ENCODE measurements at regions of chr4 and their contacts with region 1.

Region 1: GRCh38 chr4:26319467-26319948 is 1.3 kb upstream of the RBPJ start:
- DNase-seq: peak; percentile 99
- H3K4me3 Mint-ChIP-seq: peak overlapping the region; percentile 97
- H3K27ac Mint-ChIP-seq: peak overlapping the region; percentile 100
- H3K4me1 Mint-ChIP-seq: peaks cover 29% of the 10 kb centered on the region
- H3K27me3 Mint-ChIP-seq: no peaks in the 10 kb centered on the region

Region 2: DNA sequence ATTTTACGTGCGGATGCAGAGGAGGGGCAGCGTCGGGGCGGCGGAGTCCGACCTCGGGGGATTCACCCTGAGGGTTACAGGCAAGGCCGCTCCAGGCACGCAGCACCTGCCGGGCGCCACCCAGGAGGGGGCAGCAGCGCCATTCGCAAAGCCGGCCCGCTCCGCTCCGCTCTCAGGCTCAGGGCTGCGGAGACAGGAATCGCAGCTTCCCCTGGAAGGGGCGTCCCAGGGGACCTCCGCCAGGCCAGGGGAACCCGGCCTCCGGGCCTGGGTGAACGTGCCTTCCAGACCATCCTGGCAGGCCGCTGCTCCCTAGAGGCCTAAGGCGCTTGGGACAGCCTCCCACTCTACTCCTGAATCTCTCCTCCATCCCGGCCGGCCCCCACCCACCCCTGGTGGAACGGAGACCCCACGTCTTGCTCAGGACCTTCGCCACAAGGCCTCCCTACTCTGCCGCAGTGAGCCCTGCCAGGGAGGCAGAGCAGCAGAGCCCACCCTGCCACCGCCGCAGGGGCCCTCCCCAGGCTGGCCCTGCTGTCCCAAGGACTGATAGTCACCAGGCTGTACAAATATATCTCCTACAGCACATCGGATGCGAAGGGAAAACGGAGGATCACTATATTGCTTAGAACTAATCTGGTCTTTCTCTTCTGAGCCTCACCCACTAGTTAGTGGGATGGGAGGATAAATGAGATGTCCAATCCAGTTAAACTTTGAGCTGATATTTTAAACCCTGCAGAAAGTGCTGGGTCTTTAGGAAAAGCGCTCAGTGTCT is 290.5 kb before region 1 on chr4:
- intact Hi-C with region 1: loop called (anchors 2 kb)
- DNase-seq: peak; percentile 59
- H3K4me3 Mint-ChIP-seq: no peak overlapping the region
- H3K27ac Mint-ChIP-seq: peak overlapping the region; percentile 67
- H3K4me1 Mint-ChIP-seq: peaks cover 25% of the 10 kb centered on the region
- H3K27me3 Mint-ChIP-seq: peaks cover 2% of the 10 kb centered on the region

Region 3: GRCh38 chr4:26081795-26082498 is 237.6 kb before region 1 on chr4:
- intact Hi-C with region 1: loop called (anchors 1 kb)
- DNase-seq: no peak
- H3K4me3 Mint-ChIP-seq: no peak overlapping the region
- H3K27ac Mint-ChIP-seq: peak overlapping the region; percentile 93
- H3K4me1 Mint-ChIP-seq: peaks cover 79% of the 10 kb centered on the region
- H3K27me3 Mint-ChIP-seq: no peaks in the 10 kb centered on the region

Region 4: GRCh38 chr4:26088433-26088928 is 231.0 kb before region 1 on chr4:
- intact Hi-C with region 1: loop called (anchors 1 kb)
- DNase-seq: no peak
- H3K4me3 Mint-ChIP-seq: peak overlapping the region; percentile 55
- H3K27ac Mint-ChIP-seq: peak overlapping the region; percentile 94
- H3K4me1 Mint-ChIP-seq: peaks cover 70% of the 10 kb centered on the region
- H3K27me3 Mint-ChIP-seq: no peaks in the 10 kb centered on the region

Region 5: GRCh38 chr4:26130173-26130572 is 189.3 kb before region 1 on chr4:
- intact Hi-C with region 1: loop called (anchors 1 kb)
- DNase-seq: peak; percentile 28
- H3K4me3 Mint-ChIP-seq: peak overlapping the region; percentile 34
- H3K27ac Mint-ChIP-seq: peak overlapping the region; percentile 90
- H3K4me1 Mint-ChIP-seq: peaks cover 81% of the 10 kb centered on the region
- H3K27me3 Mint-ChIP-seq: no peaks in the 10 kb centered on the region

Region 6: GRCh38 chr4:26141911-26142638 is 177.4 kb before region 1 on chr4:
- intact Hi-C with region 1: loop called (anchors 1 kb)
- DNase-seq: no peak
- H3K4me3 Mint-ChIP-seq: peak overlapping the region; percentile 22
- H3K27ac Mint-ChIP-seq: peak overlapping the region; percentile 89
- H3K4me1 Mint-ChIP-seq: peaks cover 73% of the 10 kb centered on the region
- H3K27me3 Mint-ChIP-seq: no peaks in the 10 kb centered on the region

Region 7: DNA sequence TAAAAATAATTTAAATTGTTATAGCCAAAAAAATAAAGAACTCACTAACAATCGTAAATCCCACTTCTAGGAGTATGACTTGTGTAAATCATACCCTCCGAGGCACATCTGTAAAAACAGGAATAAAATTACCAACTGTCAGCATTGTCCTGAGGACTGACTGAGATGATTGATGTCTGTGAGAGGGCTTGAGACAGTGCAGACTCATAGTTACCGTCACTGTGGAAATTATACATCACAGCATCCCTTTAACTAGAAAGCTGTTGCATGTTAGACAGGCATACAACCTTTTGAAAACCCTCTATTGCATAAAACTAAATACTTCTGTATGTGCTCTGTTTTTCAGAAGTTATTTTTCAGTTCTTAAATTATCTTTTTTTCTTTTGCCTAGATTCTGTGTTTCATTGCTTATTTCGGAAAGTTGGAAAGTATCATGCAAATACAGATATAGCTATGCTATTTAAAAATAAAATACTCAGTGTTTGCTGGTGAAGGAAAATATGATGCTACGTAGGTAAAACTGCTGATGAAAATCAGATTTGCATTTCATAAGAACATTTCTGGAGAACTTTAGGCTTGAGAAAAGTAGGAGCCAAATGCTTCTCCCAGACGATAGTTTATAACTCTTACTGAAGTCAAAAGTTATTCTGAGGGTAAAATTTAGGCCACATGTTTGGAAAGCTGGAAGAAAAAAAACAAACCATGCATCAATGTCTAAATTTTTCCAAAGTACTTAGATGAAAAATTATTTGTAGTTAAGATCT is 12.3 kb before region 1 on chr4:
- intact Hi-C with region 1: loop called (anchors 1 kb)
- DNase-seq: no peak
- H3K4me3 Mint-ChIP-seq: peak overlapping the region; percentile 2
- H3K27ac Mint-ChIP-seq: peak overlapping the region; percentile 91
- H3K4me1 Mint-ChIP-seq: peaks cover 43% of the 10 kb centered on the region
- H3K27me3 Mint-ChIP-seq: no peaks in the 10 kb centered on the region

Measured in activated T-helper 2 cell treated with anti-CD3 and anti-CD28 coated beads, Interferon-gamma antibody, Interleukin-2, Interleukin-4, amounts not matched to agents 10 μg/mL and 5 μg/mL and 100 μg/mL, durations not matched to agents 14 hours and 24 hours and 36 hours (primary cell).